ENCODE measurements at regions of chr19 and their contacts with region 1.

Region 1: DNA sequence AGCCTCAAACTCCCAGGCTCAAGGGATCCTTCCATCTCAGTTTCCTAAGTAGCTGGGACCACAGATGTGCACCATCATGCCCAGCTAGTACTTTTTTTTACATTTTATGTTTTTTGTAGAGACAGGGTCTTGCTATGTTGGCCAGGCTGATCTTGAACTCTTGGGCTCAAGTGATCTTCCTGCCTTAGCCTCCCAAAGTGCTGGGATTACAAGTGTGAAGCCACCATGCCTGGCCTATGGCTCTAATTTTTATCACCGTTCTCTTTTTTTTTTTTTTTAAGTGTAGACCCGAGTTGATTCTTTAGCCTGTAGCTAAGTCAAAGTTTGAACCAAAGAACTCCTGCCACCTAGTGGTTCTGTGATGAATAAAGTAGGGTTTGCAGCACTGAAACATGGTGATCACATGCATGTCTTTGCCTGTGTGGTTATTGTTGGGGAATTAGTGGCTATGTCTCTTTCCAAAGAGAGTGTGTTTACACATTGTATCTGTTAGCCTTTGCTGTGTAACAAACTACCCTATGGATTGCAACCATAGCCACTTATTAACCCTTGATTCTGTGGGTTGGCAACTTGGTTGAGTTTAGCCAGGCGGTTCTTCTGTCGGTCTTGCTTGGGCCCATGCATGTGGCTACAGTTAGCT is 11.6 kb downstream of the NFILZ start:
- H3K4me3 Mint-ChIP-seq: no peak overlapping the region
- H3K27ac Mint-ChIP-seq: no peak overlapping the region
- H3K4me1 Mint-ChIP-seq: peaks cover 86% of the 10 kb centered on the region
- H3K27me3 Mint-ChIP-seq: no peaks in the 10 kb centered on the region

Region 2: DNA sequence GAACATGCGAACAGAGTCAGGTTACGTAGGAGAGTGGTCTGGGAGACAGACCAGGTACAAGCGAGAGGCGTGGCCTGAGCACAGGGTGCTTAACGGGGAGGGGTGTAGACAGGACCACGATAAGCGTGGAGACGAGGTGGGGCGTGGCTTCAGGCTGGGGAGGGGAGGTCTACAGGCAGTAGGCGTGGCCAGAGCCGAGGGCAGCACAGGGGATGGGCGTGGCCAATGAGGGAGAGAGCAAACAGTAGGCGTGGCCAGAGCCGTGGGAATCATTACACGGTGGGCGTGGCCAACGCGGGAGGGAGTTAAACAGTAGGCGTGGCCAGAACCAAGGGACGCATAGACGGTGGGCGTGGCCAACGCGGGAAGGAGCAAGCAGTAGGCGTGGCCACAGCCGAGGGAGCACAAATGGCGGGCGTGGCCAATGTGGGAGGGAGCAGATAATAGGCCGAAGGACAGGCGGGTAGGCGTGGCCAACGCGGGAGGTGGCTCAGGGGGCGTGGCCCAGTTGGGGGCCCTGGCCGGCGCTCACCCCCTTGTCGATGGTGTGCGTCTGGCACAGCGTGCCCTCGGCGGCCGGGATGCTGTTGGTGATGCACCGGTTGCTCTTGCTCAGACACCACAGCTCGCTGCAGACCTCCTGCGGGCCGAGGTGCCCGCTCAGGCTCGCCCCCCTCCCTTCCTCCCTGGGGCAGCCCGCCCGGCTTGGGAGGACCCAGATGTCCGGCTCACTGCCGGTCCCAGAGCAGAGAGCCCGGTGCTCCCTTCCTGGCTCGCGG is 49.6 kb before region 1 on chr19:
- intact Hi-C with region 1: loop called (anchors 10 kb)
- H3K4me3 Mint-ChIP-seq: peak overlapping the region; percentile 61
- H3K27ac Mint-ChIP-seq: peak overlapping the region; percentile 18
- H3K4me1 Mint-ChIP-seq: peaks cover 16% of the 10 kb centered on the region
- H3K27me3 Mint-ChIP-seq: peaks cover 72% of the 10 kb centered on the region

Region 3: GRCh38 chr19:8663920-8664670 is 22.1 kb after region 1 on chr19:
- intact Hi-C with region 1: no loop called
- H3K4me3 Mint-ChIP-seq: peak overlapping the region; percentile 30
- H3K27ac Mint-ChIP-seq: peak overlapping the region; percentile 55
- H3K4me1 Mint-ChIP-seq: peaks cover 9% of the 10 kb centered on the region
- H3K27me3 Mint-ChIP-seq: peaks cover 23% of the 10 kb centered on the region

Region 4: GRCh38 chr19:8835877-8836276 is 193.8 kb after region 1 on chr19:
- intact Hi-C with region 1: no loop called
- H3K4me3 Mint-ChIP-seq: no peak overlapping the region
- H3K27ac Mint-ChIP-seq: no peak overlapping the region
- H3K4me1 Mint-ChIP-seq: peaks cover 22% of the 10 kb centered on the region
- H3K27me3 Mint-ChIP-seq: peaks cover 1% of the 10 kb centered on the region